Activated T-helper 1 cell treated with anti-CD3 and anti-CD28 coated beads, Interleukin-12 subunit alpha, Interleukin-12 subunit beta, Interleukin-2, Interleukin-4 antibody, amounts not matched to agents 30 ng/mL and 10 ng/mL and 1 ng/mL, durations not matched to agents 14 hours and 24 hours and 36 hours (primary cell): ENCODE measurements at regions of chr6 and their contacts with region 1.

Region 1: DNA sequence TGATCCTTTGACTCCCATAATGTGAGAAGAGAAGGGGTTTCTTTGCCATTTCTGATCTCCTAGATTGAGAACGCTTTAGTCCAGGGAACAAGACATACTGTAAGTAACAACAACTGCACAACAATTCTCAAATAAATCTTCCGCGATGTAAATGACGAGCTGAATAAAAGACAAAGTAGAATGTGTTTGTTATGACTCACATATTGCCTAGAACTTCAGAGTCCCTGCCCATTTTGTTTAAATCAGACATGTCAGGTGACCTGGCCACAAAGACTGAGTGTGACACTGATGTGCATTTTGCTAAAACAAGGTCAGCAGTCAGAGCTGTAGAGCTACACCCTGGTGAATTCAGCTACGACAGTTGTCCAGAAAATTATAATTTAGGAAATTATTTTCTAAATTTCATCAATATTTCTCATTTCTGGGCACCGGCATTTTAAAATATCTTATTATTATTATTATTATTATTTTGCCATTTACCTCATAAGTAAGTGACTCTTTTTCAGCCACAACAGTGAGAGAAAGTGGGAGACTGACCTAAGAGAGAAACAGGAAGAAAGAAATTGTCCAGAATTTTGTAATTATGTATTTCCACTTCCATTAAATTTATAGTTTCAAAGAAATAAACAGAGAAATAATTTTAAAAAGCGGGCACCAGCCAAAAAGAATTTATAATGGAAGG is 156.8 kb upstream of the CITED2 start:
- DNase-seq: no peak
- H3K4me3 Mint-ChIP-seq: peak overlapping the region; percentile 2
- H3K27ac Mint-ChIP-seq: peak overlapping the region; percentile 32
- H3K4me1 Mint-ChIP-seq: peaks cover 55% of the 10 kb centered on the region
- H3K27me3 Mint-ChIP-seq: no peaks in the 10 kb centered on the region

Region 2: DNA sequence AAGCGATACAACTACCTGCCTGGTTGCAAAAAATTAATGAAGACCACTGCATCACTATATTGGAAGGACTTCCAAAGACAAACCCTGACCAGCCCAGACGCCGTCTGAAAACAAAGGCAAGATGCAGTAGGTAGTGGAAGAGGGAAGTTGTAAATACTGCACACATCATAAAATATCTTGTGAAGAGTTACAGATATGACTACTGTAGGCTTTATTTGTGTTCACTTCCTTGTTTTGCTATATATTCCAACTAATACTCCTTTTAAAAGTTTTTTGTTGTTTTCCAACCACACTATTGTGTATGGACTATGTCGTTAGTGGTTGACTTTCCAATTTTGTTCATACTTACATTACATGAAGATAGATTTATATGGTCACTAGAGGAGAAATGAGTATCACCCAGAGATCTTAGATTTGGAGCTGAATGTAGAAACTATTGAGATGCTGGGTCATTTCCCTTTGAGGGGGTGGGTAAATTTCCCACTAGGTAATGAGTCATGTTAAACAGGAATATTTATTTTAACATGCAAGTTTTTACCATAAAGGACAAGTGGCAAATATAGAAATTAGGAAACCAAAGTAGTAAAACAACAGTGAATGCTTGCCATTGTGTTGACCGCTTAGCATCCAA is 222.8 kb before region 1 on chr6:
- intact Hi-C with region 1: no loop called
- DNase-seq: no peak
- H3K4me3 Mint-ChIP-seq: no peak overlapping the region
- H3K27ac Mint-ChIP-seq: peak overlapping the region; percentile 78
- H3K4me1 Mint-ChIP-seq: peaks cover 32% of the 10 kb centered on the region
- H3K27me3 Mint-ChIP-seq: peaks cover 6% of the 10 kb centered on the region

Region 3: GRCh38 chr6:139515511-139515910 is 15.7 kb before region 1 on chr6:
- intact Hi-C with region 1: loop called (anchors 2 kb)
- DNase-seq: no peak
- H3K4me3 Mint-ChIP-seq: no peak overlapping the region
- H3K27ac Mint-ChIP-seq: peak overlapping the region; percentile 6
- H3K4me1 Mint-ChIP-seq: peaks cover 11% of the 10 kb centered on the region
- H3K27me3 Mint-ChIP-seq: peaks cover 3% of the 10 kb centered on the region

Region 4: GRCh38 chr6:139655790-139656687 is 124.8 kb after region 1 on chr6:
- intact Hi-C with region 1: no loop called
- DNase-seq: no peak
- H3K4me3 Mint-ChIP-seq: no peak overlapping the region
- H3K27ac Mint-ChIP-seq: no peak overlapping the region
- H3K4me1 Mint-ChIP-seq: no peaks in the 10 kb centered on the region
- H3K27me3 Mint-ChIP-seq: no peaks in the 10 kb centered on the region